ENCODE measurements at regions of chr16 and their contacts with region 1.

Region 1: GRCh38 chr16:56866943-56867830 is 2.2 kb downstream of the SLC12A3 start:
- DNase-seq: peak in 2 of 3 donors; percentile 42 to 53
- ATAC-seq: peak in 1 of 2 donors; percentile 23
- H3K4me3 ChIP-seq: no peak overlapping the region
- H3K27ac ChIP-seq: no peak overlapping the region
- H3K4me1 ChIP-seq: no peaks in the 10 kb centered on the region
- H3K27me3 ChIP-seq: no peaks in the 10 kb centered on the region

Region 2: DNA sequence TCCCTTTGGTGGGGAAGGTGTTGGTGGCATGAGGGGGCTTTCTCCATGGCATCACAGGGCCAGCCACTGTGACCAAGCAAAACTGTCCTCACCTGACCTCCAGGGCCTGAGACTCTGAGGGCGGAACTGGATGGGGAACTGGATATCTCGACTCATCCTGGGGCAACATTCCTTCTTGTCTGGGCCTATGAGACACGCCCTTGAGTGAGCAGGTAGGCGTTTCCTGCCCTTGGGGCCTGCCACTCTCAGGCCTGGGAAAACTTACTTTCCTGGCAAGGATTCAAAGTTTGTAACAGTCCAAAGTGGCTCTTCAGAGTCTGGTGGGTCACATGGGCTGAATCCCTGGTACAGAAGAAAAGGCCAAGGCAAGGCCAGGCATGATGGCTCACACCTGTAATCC is 175.3 kb before region 1 on chr16:
- intact Hi-C with region 1: no loop called
- DNase-seq: no peak
- ATAC-seq: peak; percentile 53 to 69
- H3K4me3 ChIP-seq: no peak overlapping the region
- H3K27ac ChIP-seq: no peak overlapping the region
- H3K4me1 ChIP-seq: no peaks in the 10 kb centered on the region
- H3K27me3 ChIP-seq: no peaks in the 10 kb centered on the region

Region 3: DNA sequence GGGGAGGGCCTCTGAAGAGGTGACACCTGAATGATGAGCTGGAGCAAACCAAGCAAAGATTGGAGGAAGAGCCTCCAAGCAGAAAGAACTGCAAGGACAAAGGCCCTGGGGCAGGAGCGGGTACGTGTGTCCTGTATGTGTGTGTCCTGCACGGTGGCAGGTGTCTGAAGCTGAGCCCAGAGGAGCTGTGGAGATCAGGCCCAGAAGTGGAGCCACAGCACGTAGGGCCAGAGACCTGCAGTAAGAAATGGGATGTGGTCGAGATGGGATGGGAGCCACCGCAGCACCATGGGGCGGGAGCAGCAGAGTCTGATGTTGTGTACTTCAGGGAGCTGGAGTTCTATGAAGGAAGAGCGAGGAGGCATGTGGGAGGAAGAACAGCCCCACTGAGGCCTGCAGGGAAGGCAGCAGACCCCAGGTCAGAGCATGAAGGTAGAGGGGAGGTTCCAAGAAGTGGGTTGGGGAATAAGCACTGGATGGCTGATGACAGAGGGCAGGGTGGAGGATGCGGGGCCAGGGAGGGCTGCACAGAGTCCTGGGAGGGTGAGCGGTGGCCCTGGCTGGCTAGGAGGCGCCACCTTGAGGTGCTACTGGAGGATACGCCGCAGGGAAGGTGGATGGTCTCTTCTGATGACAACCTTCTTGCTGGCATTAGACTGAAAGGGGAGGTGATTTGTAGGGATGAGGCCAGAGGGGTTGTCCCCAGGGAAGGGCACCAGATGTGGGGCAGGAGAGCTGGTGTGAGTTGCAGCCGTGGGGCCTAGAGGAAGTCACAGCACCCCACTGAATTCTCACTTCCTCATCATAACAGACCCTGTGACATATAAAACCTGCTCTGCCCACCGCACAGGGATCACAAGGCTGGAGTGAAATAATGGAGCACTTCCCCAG is 83.9 kb after region 1 on chr16:
- intact Hi-C with region 1: loop called in 2 of 4 experiments (anchors 5 to 10 kb)
- DNase-seq: peak in 2 of 3 donors; percentile 71 to 72
- ATAC-seq: peak; percentile 77 to 78
- H3K4me3 ChIP-seq: no peak overlapping the region
- H3K27ac ChIP-seq: no peak overlapping the region
- H3K4me1 ChIP-seq: no peaks in the 10 kb centered on the region
- H3K27me3 ChIP-seq: no peaks in the 10 kb centered on the region

Region 4: DNA sequence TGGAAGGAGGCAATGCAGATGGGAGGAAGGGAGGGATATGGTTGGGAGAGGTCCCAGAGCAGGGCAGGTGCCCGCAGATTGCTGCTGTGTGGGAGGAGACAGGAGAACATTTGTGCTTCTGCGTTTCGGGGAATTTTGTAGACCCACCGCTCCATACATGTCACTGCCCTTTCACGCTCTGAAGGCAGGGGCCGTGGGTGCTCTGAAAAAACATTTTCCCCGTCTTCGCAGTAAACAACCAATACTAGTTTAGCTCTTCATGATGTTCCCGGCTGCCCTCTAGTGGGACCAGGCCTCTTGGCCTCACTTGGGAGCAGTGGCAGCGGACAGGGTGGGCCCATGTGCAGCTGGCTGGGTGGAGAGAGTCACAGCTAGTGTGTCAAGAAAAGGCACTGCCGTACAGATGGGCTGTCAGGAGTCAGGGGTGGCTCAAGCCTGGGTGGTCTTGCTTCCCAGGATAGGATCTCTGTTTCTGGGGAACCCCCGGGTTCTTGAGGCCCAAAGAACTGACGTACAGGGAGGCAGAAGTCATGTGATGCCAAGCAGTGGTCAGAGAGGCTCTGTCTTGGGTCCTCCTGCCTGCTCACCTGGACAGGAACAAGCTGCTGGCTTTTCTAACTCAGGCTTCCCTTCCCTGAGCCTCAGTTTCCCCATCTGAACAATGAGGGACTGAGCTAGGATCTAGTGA is 178.7 kb after region 1 on chr16:
- intact Hi-C with region 1: loop called (anchors 5 to 10 kb)
- DNase-seq: peak; percentile 81 to 92 (median 87)
- ATAC-seq: peak; percentile 79 to 83
- H3K4me3 ChIP-seq: no peak overlapping the region
- H3K27ac ChIP-seq: no peak overlapping the region
- H3K4me1 ChIP-seq: no peaks in the 10 kb centered on the region
- H3K27me3 ChIP-seq: no peaks in the 10 kb centered on the region

Measured in right cardiac atrium (tissue), 5 donors.